ENCODE measurements at regions of chr6 and their contacts with region 1.

Region 1: DNA sequence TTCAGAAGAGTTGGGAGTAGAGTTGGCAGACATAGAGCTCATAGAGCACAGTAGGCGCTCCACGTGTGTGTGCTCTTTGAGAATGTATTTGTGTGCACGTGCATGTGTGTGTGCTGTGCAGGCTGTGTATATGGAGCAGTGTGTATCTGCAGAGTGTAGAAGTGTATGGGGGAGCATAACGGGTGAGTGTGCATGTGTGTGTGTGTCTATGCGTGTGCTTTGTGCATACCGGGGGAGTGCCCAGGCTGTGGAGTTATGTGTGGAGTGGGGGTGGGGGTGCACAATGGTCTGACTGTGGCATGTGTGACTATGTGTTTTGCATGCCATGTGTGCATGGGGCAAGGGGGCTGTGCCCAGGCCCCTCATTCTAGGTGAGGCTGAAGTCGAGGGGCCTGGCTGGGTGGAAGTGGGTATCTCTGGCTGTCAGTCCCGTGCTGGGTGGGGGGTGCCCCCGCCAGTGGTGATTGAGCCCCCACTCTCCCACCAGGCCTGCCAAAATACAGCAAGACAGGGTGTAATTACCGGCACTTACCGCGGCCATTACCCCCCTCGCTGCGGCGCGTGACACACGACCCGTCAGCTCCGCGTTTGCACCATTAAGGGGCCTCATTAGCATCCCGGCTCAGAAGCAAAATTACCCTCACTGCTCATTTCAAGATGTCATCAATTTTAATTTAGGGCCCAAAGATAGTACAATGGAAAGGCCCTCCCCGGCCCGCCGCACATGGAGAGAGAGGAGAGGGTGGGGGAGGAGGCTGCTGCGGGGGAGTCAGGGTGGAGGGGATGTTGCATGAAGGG is 39.1 kb downstream of the MDFI start:
- DNase-seq: no peak
- ATAC-seq: no peak
- H3K4me3 ChIP-seq: no peak overlapping the region
- H3K4me3 Mint-ChIP-seq: no peak overlapping the region
- H3K27ac ChIP-seq: no peak overlapping the region
- H3K27ac Mint-ChIP-seq: no peak overlapping the region
- H3K4me1 ChIP-seq: peaks cover 3% of the 10 kb centered on the region
- H3K4me1 Mint-ChIP-seq: peaks cover 5% of the 10 kb centered on the region
- H3K27me3 ChIP-seq: peaks cover 0 to 2% of the 10 kb centered on the region in 2 experiments
- H3K27me3 Mint-ChIP-seq: peaks cover 12% of the 10 kb centered on the region
- CTCF ChIP-seq: no peak

Region 2: DNA sequence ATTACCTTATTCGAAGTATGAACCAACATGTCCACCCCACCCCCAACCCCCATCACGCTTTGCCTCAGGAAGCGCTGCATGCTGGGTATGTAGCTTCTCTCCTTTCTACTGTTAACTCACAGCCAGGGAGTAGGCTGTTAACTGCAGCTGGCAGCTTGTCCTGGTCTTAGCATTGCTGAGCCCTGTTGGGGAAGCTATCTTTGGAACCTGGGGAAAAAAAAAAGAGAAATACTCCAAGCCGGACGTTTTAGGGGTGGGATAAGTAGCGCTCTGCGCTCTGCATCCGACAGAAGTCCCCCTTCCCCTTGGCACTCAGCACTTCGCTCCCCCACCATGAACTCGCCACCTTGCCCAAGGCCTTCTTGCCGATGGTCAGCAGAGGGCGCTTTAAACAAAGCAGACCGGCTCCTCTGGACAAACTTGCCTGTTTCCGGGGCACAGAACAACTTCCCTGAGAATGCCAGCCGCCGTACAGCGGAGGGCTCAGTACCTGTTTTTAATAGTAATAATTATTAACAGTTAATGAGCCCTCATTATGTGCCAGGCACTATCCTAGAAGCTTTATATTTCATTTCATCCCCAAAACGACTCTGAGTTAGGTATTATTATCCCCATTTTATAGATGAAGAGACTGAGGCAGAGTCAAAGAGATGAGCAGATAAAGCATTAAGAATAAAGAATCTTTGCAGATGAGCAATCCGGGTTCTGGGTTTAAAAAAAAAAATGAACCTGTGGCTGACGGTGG is 74.3 kb before region 1 on chr6:
- CTCF ChIA-PET with region 1: interaction called, 11 read pairs
- POLR2A ChIA-PET with region 1: no interaction called
- intact Hi-C with region 1: no loop called
- DNase-seq: peak; percentile 45 to 87 (median 74)
- ATAC-seq: peak; percentile 81
- H3K4me3 ChIP-seq: no peak overlapping the region
- H3K4me3 Mint-ChIP-seq: no peak overlapping the region
- H3K27ac ChIP-seq: no peak overlapping the region
- H3K27ac Mint-ChIP-seq: no peak overlapping the region
- H3K4me1 ChIP-seq: no peaks in the 10 kb centered on the region
- H3K4me1 Mint-ChIP-seq: peaks cover 5% of the 10 kb centered on the region
- H3K27me3 ChIP-seq: peaks cover 0 to 4% of the 10 kb centered on the region in 2 experiments
- H3K27me3 Mint-ChIP-seq: peaks cover 12% of the 10 kb centered on the region
- CTCF ChIP-seq: peak; percentile 62

Region 3: GRCh38 chr6:41723530-41724227 is 46.4 kb after region 1 on chr6:
- CTCF ChIA-PET with region 1: no interaction called
- POLR2A ChIA-PET with region 1: no interaction called
- intact Hi-C with region 1: no loop called
- DNase-seq: peak in 3 of 9 experiments; percentile 6 to 60 (median 38)
- ATAC-seq: no peak
- H3K4me3 ChIP-seq: no peak overlapping the region
- H3K4me3 Mint-ChIP-seq: no peak overlapping the region
- H3K27ac ChIP-seq: peak overlapping the region in 1 of 2 experiments; percentile 32
- H3K27ac Mint-ChIP-seq: no peak overlapping the region
- H3K4me1 ChIP-seq: peaks cover 13% of the 10 kb centered on the region
- H3K4me1 Mint-ChIP-seq: peaks cover 13% of the 10 kb centered on the region
- H3K27me3 ChIP-seq: no peaks in the 10 kb centered on the region
- H3K27me3 Mint-ChIP-seq: no peaks in the 10 kb centered on the region
- CTCF ChIP-seq: no peak

Region 4: GRCh38 chr6:42279144-42279781 is 601.9 kb after region 1 on chr6:
- CTCF ChIA-PET with region 1: no interaction called
- POLR2A ChIA-PET with region 1: no interaction called
- intact Hi-C with region 1: no loop called
- DNase-seq: peak in 7 of 9 experiments; percentile 27 to 74 (median 50)
- ATAC-seq: peak; percentile 10
- H3K4me3 ChIP-seq: no peak overlapping the region
- H3K4me3 Mint-ChIP-seq: peak overlapping the region; percentile 64
- H3K27ac ChIP-seq: peak overlapping the region; percentile 59 to 72
- H3K27ac Mint-ChIP-seq: peak overlapping the region; percentile 88
- H3K4me1 ChIP-seq: peaks cover 54% of the 10 kb centered on the region
- H3K4me1 Mint-ChIP-seq: peaks cover 52% of the 10 kb centered on the region
- H3K27me3 ChIP-seq: no peaks in the 10 kb centered on the region
- H3K27me3 Mint-ChIP-seq: no peaks in the 10 kb centered on the region
- CTCF ChIP-seq: no peak